ENCODE measurements at regions of chr22 and their contacts with region 1.

Region 1: DNA sequence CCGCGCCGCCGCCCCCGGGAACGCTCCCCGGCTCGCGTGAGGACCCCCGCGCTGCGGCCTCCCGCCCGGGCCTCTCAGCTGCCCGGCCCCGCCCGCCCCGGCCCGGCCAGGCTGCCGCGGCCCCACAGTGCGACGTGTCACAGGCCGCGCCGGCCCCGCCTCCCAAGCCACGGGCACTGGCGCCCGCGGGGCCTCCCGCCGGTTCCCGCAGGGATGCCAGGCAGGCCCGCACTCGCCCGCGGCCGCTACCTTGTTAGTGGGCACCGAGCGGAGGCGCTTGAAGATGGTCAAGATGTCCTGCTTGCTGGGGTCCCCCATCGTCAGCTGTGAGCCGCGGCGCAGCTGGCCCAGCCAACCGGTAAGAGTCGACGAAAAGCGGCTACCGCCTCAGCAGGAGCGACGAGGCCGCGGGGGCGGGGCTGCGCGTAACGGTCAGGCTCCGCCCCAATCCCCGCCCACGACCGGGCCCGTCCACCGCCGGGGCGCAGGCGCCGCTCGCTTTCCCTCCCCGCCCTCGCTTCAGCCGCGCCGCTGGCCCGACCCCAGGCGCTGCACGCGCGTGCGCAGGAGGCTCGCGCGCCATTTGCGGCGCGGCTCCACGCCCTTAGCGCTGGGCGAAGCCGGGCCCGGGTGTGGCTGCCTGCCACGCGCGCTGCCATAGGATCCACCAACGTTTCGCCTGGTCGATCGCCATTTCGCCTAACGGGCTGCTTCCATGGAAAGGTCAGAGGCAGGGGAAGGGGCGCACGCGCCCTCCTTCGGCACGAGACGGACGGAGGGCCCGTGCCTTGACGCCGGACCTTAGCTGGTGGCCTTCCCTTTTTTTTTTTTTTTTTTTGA is at the start of gene ARFGAP3:
- DNase-seq: peak; percentile 90 to 99 (median 96)
- H3K4me3 ChIP-seq: peak within 1 kb of the TSS; percentile 81 to 91
- H3K4me3 Mint-ChIP-seq: peak within 1 kb of the TSS; percentile 82 to 91 (median 88)
- H3K27ac ChIP-seq: peak within 1 kb of the TSS; percentile 71
- H3K27ac Mint-ChIP-seq: peak within 1 kb of the TSS; percentile 88 to 95 (median 91)
- H3K4me1 ChIP-seq: peaks cover 18% of the 10 kb centered on the region
- H3K4me1 Mint-ChIP-seq: peaks cover 9 to 27% (median 16%) of the 10 kb centered on the region in 4 donors
- H3K27me3 ChIP-seq: no peaks in the 10 kb centered on the region
- H3K27me3 Mint-ChIP-seq: no peaks in the 10 kb centered on the region
- total RNA-seq, gene ARFGAP3: 44.7 to 45.7 TPM

Region 2: GRCh38 chr22:42649246-42650099 is 207.6 kb before region 1 on chr22 and contains the start of gene CYB5R3:
- CTCF ChIA-PET with region 1: no interaction called
- POLR2A ChIA-PET with region 1: no interaction called
- intact Hi-C with region 1: loop called (anchors 1 kb)
- DNase-seq: peak; percentile 68 to 77 (median 76)
- H3K4me3 ChIP-seq: peak within 1 kb of the TSS; percentile 67 to 86
- H3K4me3 Mint-ChIP-seq: peak within 1 kb of the TSS; percentile 98 to 100 (median 99)
- H3K27ac ChIP-seq: peak within 1 kb of the TSS; percentile 69
- H3K27ac Mint-ChIP-seq: peak within 1 kb of the TSS; percentile 90 to 100 (median 100)
- H3K4me1 ChIP-seq: peaks cover 42% of the 10 kb centered on the region
- H3K4me1 Mint-ChIP-seq: peaks cover 10 to 42% (median 25%) of the 10 kb centered on the region in 4 donors
- H3K27me3 ChIP-seq: no peaks in the 10 kb centered on the region
- H3K27me3 Mint-ChIP-seq: peaks cover 2% of the 10 kb centered on the region in 2 donors
- total RNA-seq, gene CYB5R3: 42.7 to 43.2 TPM

Region 3: GRCh38 chr22:42868751-42869251 is 11.7 kb after region 1 on chr22:
- CTCF ChIA-PET with region 1: interaction called, 35 read pairs
- POLR2A ChIA-PET with region 1: interaction called, 4 read pairs
- intact Hi-C with region 1: no loop called
- DNase-seq: no peak
- H3K4me3 ChIP-seq: no peak overlapping the region
- H3K4me3 Mint-ChIP-seq: no peak overlapping the region
- H3K27ac ChIP-seq: no peak overlapping the region
- H3K27ac Mint-ChIP-seq: no peak overlapping the region
- H3K4me1 ChIP-seq: no peaks in the 10 kb centered on the region
- H3K4me1 Mint-ChIP-seq: peaks cover under 1 to 3% (median under 1%) of the 10 kb centered on the region in 4 donors
- H3K27me3 ChIP-seq: no peaks in the 10 kb centered on the region
- H3K27me3 Mint-ChIP-seq: no peaks in the 10 kb centered on the region

Region 4: GRCh38 chr22:43014869-43015676 is 158.0 kb after region 1 on chr22 and contains the start of gene PACSIN2:
- CTCF ChIA-PET with region 1: no interaction called
- POLR2A ChIA-PET with region 1: interaction called, 20 read pairs
- intact Hi-C with region 1: loop called (anchors 2 kb)
- DNase-seq: peak; percentile 97 to 99 (median 97)
- H3K4me3 ChIP-seq: peak within 1 kb of the TSS; percentile 74 to 76
- H3K4me3 Mint-ChIP-seq: peak within 1 kb of the TSS; percentile 97 to 99 (median 98)
- H3K27ac ChIP-seq: peak within 1 kb of the TSS; percentile 79
- H3K27ac Mint-ChIP-seq: peak within 1 kb of the TSS; percentile 92 to 99 (median 97)
- H3K4me1 ChIP-seq: peaks cover 27% of the 10 kb centered on the region
- H3K4me1 Mint-ChIP-seq: peaks cover 22 to 59% (median 37%) of the 10 kb centered on the region in 4 donors
- H3K27me3 ChIP-seq: no peaks in the 10 kb centered on the region
- H3K27me3 Mint-ChIP-seq: no peaks in the 10 kb centered on the region
- total RNA-seq, gene PACSIN2: 54.5 to 55.0 TPM

Region 5: GRCh38 chr22:43042101-43042780 is 185.2 kb after region 1 on chr22:
- CTCF ChIA-PET with region 1: no interaction called
- POLR2A ChIA-PET with region 1: no interaction called
- intact Hi-C with region 1: no loop called
- DNase-seq: no peak
- H3K4me3 ChIP-seq: no peak overlapping the region
- H3K4me3 Mint-ChIP-seq: no peak overlapping the region
- H3K27ac ChIP-seq: no peak overlapping the region
- H3K27ac Mint-ChIP-seq: peak overlapping the region in 2 of 7 donors; percentile 5 to 36
- H3K4me1 ChIP-seq: no peaks in the 10 kb centered on the region
- H3K4me1 Mint-ChIP-seq: peaks cover 0 to 4% (median 0%) of the 10 kb centered on the region in 4 donors
- H3K27me3 ChIP-seq: no peaks in the 10 kb centered on the region
- H3K27me3 Mint-ChIP-seq: no peaks in the 10 kb centered on the region

Region 6: DNA sequence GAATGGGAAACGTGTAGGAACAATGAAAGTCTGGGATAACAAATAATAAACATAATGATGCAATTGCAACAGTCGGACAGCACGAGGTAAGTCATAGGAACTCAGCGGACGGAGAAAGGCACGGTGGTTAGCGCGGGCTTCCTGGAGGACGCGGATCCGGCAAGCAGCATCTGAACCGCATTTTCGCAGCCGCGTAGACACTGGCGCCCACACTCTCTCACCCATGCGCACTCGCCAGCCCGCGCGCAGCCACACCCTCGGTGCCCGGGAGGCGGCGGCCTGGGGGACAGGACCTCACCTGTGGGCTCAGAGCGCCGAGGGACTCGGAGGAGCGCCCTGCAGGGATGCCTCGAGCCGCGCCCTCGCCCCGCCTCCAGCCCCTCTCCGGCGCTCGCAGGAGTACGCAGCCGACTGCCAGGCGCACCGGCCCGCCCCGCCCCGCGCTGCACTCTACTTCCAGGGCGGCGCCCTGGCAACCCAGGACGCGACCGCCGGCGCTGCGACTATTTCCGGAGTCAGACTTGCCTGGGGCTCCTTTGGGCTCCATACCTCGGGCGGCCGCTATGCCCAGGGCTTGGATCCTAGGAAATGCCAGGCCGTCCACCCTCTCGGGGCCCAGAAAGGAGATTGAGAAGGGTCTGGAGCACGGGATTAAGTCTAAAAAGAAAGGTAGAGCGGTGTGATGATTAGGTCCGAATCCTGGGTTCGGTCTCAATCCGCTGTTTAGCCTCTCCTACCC is 232.1 kb after region 1 on chr22 and contains the start of gene TTLL1:
- CTCF ChIA-PET with region 1: no interaction called
- POLR2A ChIA-PET with region 1: no interaction called
- intact Hi-C with region 1: loop called (anchors 5 kb)
- DNase-seq: peak; percentile 86 to 89 (median 88)
- H3K4me3 ChIP-seq: peak within 1 kb of the TSS; percentile 41 to 91
- H3K4me3 Mint-ChIP-seq: peak within 1 kb of the TSS; percentile 85 to 96 (median 92)
- H3K27ac ChIP-seq: peak within 1 kb of the TSS; percentile 27
- H3K27ac Mint-ChIP-seq: peak within 1 kb of the TSS; percentile 75 to 92 (median 89)
- H3K4me1 ChIP-seq: peaks cover 13% of the 10 kb centered on the region
- H3K4me1 Mint-ChIP-seq: peaks cover 8 to 26% (median 18%) of the 10 kb centered on the region in 4 donors
- H3K27me3 ChIP-seq: no peaks in the 10 kb centered on the region
- H3K27me3 Mint-ChIP-seq: no peaks in the 10 kb centered on the region
- total RNA-seq, gene TTLL1: 6.4 to 7.8 TPM